HCT116 (cell line): ENCODE measurements at regions of chr1 and their contacts with region 1.

Region 1: DNA sequence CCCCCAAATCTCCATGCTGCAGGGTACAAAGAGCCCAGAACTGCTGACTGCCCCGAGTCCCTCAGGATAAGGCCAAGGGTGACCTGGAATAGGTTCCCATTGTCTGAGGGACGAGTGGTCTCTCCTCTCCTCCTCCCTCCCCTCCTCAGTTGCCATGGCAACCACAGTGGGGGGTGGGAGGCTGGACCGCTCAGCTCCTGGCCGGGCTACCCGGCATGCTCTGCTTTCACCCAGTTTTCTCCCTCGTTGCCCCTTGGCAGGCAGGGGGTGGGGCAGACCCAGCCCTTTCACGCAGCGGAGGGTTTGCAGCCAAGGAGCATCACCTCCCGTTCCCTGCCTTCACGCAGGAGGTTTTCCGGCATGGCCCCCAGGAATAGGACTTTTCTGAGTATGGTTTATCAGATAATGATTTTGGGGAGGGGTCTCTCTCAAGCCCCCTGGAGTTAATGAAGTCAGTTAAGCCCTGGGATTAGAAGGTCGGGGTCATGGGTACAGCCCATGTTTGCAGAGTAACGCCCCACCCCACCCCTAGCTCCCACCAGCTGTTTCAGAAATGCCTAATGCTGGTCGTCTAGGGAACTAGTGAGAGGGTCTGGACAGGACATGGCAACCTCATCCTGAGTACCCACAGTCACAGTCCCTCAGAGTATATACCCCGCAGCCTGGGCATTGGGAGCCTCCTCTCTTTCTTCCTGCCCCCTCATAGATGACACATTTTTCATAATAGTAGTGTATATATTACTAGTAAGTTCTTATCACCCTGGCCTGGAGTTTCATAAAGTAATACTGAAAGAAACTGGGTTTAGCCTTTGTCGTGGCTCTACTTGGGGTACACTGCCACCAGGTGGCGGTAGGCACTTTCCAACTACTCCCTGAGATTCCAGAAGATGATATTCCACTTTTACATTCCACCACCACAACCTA is 20.7 kb downstream of the C1QB start:
- DNase-seq: peak; percentile 41
- ATAC-seq: peak; percentile 87
- H3K4me3 ChIP-seq: no peak overlapping the region
- H3K27ac ChIP-seq: no peak overlapping the region
- H3K4me1 ChIP-seq: no peaks in the 10 kb centered on the region
- H3K27me3 ChIP-seq: peaks cover 6% of the 10 kb centered on the region; the same call in 1 of the 2 replicates
- CTCF ChIP-seq: peak; percentile 77 to 97 (median 89)
- POLR2A ChIP-seq: no peak
- RAD21 ChIP-seq: peak; percentile 97

Region 2: DNA sequence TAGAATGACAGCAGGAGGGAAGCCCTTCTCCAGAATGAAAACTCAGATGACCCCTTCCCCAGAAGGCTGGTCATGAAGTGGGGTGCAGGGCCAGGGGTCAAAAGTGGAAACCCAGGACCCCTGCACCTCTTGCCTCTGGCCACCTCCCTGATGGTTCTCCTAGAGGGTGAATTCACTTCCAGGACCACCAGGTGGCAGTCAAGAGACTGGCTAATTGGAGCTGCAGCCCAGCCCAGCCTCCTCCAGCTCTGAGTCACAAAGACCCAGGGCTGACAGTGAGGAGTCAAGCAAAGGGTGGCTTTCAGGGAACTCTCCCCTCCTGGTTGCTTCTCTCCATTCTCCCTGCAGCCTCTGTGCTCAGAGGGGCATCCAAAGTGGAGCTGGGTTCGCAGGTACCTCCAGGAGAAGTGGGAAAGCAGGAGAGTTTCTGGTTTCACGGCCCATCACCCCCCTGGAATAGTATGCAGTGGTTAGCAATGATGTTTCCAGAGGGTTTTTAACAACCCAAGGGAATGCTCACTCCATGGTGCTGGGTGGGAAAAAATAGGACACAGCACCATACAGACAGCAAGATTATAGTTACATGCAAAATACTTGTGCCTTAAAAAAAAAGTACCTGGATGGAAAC is 30.8 kb after region 1 on chr1:
- CTCF ChIA-PET with region 1: interaction called, 5 read pairs
- POLR2A ChIA-PET with region 1: no interaction called
- RAD21 ChIA-PET with region 1: no interaction called
- intact Hi-C with region 1: loop called (anchors 1 kb)
- DNase-seq: peak; percentile 60
- ATAC-seq: peak; percentile 99
- H3K4me3 ChIP-seq: no peak overlapping the region
- H3K27ac ChIP-seq: no peak overlapping the region
- H3K4me1 ChIP-seq: peaks cover 0 to 14% of the 10 kb centered on the region in 2 experiments; a peak in 3 of 4 replicates
- H3K27me3 ChIP-seq: no peaks in the 10 kb centered on the region
- CTCF ChIP-seq: peak; percentile 84 to 94 (median 89)
- POLR2A ChIP-seq: no peak
- RAD21 ChIP-seq: peak; percentile 93

Region 3: DNA sequence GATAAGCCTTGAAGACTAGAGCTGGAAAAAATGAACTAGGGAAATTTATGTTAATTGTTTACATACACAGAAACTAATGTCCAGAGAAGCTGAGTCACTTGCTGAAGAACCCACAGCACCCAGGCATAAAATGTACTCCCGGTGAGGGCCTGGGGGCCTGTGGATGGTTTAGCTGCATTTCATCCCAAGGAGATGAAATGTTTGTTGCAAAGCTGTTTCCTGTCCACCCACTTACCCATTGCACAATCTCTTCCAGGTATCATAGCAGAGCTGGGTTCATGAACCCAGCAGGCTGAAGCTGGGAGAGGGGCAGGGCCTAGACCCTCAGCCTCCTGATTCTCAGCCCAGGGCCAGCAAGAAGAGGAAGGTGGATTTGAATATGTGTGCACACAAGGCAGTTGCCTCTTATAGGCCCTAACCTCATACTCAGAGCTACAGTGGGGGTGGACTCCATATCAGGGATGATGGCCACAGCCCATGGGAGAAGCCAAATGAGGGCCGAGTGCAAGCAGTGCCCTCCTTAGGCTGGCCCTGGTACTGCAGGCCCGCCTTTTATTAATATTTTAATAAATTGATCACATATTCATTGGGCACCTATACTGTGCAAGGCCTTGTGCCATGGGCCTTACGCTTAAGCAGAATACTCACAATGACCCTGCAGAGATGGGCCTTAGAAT is 188.2 kb after region 1 on chr1:
- CTCF ChIA-PET with region 1: interaction called, 20 read pairs
- POLR2A ChIA-PET with region 1: interaction called, 3 read pairs
- RAD21 ChIA-PET with region 1: interaction called, 5 to 6 read pairs
- intact Hi-C with region 1: loop called (anchors 1 kb)
- DNase-seq: peak; percentile 33
- ATAC-seq: peak; percentile 91
- H3K4me3 ChIP-seq: no peak overlapping the region
- H3K27ac ChIP-seq: no peak overlapping the region
- H3K4me1 ChIP-seq: peaks cover 6 to 7% of the 10 kb centered on the region in 2 experiments; a peak in 3 of 4 replicates
- H3K27me3 ChIP-seq: no peaks in the 10 kb centered on the region
- CTCF ChIP-seq: peak; percentile 87 to 95 (median 91)
- POLR2A ChIP-seq: no peak
- RAD21 ChIP-seq: peak; percentile 95

Region 4: DNA sequence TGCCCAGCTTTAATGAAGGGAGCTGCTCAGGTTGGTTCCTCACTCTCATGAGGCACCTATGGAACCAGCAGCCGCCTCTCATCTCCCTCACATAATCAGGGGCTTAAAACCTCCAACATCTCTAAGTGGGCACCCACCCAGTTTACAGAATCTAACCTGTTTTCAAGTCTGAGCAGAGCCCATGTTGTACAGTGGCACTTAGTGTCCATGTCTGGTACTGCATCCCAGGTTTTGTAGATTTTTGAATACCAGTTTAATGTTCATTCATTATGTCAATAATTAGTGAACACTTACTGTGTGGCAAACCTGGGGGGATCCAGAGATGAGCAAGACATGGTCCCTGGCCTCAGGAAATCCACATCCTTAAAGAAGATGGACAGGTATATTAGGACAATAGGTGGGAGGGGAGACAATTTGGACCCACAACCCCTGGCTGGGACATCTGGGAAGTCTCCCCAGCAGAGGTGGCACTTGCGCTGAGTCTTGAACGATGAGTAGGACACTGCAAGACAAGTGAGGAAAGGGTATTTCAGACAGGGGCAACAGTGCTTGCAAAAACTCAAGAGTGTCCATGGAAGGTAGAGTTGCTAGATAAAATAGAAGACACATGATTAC is 215.6 kb after region 1 on chr1:
- CTCF ChIA-PET with region 1: interaction called, 24 read pairs
- POLR2A ChIA-PET with region 1: no interaction called
- RAD21 ChIA-PET with region 1: no interaction called
- intact Hi-C with region 1: loop called (anchors 1 kb)
- DNase-seq: peak; percentile 28
- ATAC-seq: peak; percentile 79
- H3K4me3 ChIP-seq: no peak overlapping the region
- H3K27ac ChIP-seq: no peak overlapping the region
- H3K4me1 ChIP-seq: no peaks in the 10 kb centered on the region
- H3K27me3 ChIP-seq: no peaks in the 10 kb centered on the region
- CTCF ChIP-seq: peak; percentile 87 to 90 (median 89)
- POLR2A ChIP-seq: no peak
- RAD21 ChIP-seq: peak; percentile 88

Region 5: DNA sequence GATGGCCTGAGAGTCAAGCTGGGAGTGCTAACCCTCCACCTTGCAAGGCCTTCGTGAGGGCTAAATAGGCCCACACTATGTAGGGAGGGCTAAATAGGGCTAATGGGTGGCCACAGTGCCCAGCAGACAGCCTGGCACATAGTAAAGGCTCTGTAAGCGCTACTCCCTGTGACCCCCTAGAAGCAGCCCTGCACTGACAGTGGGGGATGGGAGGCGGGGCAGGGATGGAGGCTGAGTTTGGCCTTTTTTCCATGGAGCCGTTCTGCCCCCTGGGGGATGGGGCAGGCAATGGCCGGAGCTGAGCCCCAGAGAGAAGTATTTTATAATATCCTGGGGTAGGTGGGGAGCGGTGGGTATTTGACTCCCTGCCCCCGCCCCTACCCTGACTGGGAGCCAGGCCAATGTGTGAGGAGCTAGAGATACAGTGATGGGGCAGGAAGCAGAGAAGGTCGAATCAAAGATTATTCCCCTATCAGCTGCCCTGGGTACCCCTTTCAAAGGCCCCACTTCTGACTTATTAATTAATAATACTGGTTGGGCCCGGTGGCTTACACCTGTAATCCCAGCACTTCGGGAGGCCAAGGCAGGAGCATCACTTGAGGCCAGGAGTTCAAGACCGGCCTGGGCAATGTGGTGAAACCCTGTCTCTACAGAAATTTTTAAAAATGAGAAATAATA is 256.6 kb after region 1 on chr1:
- CTCF ChIA-PET with region 1: interaction called, 67 read pairs
- POLR2A ChIA-PET with region 1: no interaction called
- RAD21 ChIA-PET with region 1: interaction called, 4 to 6 read pairs
- intact Hi-C with region 1: loop called (anchors 1 kb)
- DNase-seq: peak; percentile 41
- ATAC-seq: peak; percentile 96
- H3K4me3 ChIP-seq: no peak overlapping the region
- H3K27ac ChIP-seq: no peak overlapping the region
- H3K4me1 ChIP-seq: 0 out of 4 replicates have a peak, but pooled peaks cover 0 to 2% of the 10 kb centered on the region in 2 experiments
- H3K27me3 ChIP-seq: no peaks in the 10 kb centered on the region
- CTCF ChIP-seq: peak; percentile 92 to 93 (median 93)
- POLR2A ChIP-seq: no peak
- RAD21 ChIP-seq: peak; percentile 97

Region 6: GRCh38 chr1:22969304-22969709 is 295.6 kb after region 1 on chr1:
- CTCF ChIA-PET with region 1: interaction called, 9 read pairs
- POLR2A ChIA-PET with region 1: no interaction called
- RAD21 ChIA-PET with region 1: no interaction called
- intact Hi-C with region 1: loop called (anchors 2 kb)
- DNase-seq: no peak
- ATAC-seq: no peak
- H3K4me3 ChIP-seq: no peak overlapping the region
- H3K27ac ChIP-seq: no peak overlapping the region
- H3K4me1 ChIP-seq: no peaks in the 10 kb centered on the region
- H3K27me3 ChIP-seq: peaks cover 6% of the 10 kb centered on the region; the same call in 1 of the 2 replicates
- CTCF ChIP-seq: no peak
- POLR2A ChIP-seq: no peak
- RAD21 ChIP-seq: no peak

Region 7: DNA sequence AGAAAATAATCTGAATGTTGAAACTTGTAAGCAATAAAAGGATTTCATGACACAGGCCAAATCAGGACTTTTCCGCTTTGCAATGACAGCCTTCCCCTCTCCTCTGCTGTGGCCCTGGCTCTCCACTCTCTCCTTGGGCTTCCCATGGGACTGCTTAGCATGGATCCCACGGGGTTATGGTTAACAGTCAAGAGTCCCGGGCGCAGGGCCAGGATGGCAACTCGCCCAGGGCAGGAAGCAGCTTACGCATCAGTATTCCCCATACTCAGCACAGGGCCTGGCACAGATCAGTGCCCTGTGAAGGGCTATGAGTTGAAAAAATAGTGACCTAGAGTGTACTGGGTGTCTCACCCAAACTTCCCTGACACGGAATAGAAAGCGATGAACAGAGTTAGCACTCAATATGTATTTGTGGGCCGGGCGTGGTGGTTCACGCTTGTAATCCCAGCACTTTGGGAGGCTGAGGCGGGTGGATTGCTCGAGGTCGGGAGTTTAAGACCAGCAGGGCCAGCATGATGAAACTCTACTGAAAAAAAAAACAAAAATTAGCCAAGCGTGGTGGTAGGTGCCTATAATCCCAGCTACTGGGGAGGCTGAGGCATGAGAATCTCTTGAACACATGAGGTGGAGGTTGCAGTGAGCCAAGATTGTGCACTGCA is 1616.3 kb after region 1 on chr1:
- CTCF ChIA-PET with region 1: no interaction called
- POLR2A ChIA-PET with region 1: no interaction called
- RAD21 ChIA-PET with region 1: no interaction called
- intact Hi-C with region 1: no loop called
- DNase-seq: no peak
- ATAC-seq: peak; percentile 78
- H3K4me3 ChIP-seq: no peak overlapping the region
- H3K27ac ChIP-seq: no peak overlapping the region
- H3K4me1 ChIP-seq: peaks cover 33 to 61% of the 10 kb centered on the region in 2 experiments
- H3K27me3 ChIP-seq: peaks cover 7% of the 10 kb centered on the region; the same call in 1 of the 2 replicates
- CTCF ChIP-seq: no peak
- POLR2A ChIP-seq: no peak
- RAD21 ChIP-seq: no peak